ENCODE measurements at regions of chr3 and their contacts with region 1.

Region 1: DNA sequence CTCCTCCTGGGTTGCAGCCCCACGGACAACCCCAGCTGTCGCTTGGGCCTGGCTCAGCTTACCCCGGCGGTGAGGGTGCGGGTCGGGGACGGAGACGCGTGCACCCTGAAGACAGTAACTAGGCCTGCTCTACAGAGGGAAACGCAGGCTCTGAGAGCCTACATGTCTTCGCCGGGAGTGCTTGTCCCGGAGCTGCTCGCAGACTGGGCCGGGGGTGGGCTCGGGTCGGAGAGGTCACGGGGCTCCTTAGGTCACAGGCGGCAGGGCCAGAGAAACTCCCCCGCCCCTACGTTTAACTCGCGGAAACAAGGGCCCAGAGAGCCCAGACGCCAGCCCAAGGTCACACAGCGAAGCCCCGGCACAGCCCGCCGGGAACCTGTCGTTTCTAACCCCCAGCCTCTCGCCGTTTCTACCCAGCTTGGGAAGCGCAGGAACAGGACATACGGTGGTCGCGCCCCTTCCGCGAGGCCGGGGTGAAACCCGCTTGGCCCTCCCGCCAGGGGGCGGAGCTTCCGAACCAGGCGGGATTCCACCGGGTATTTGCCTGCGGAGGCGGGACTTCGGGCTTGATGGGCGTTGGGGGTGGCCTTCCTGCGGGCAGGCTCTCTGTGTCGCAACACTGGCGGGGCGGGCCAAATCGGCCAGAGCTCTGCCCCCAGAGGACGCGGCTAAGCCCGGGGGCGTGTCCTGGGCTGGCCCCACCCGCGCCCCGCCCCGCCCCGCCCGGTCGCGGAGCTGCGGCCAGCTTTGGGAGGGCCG is at the start of gene HDAC11:
- DNase-seq: peak; percentile 99
- H3K4me3 Mint-ChIP-seq: peak within 1 kb of the TSS; percentile 92
- H3K27ac Mint-ChIP-seq: peak within 1 kb of the TSS; percentile 82
- H3K4me1 Mint-ChIP-seq: peaks cover 12% of the 10 kb centered on the region
- H3K27me3 Mint-ChIP-seq: no peaks in the 10 kb centered on the region
- total RNA-seq, gene HDAC11: 1.6 to 2.4 TPM

Region 2: DNA sequence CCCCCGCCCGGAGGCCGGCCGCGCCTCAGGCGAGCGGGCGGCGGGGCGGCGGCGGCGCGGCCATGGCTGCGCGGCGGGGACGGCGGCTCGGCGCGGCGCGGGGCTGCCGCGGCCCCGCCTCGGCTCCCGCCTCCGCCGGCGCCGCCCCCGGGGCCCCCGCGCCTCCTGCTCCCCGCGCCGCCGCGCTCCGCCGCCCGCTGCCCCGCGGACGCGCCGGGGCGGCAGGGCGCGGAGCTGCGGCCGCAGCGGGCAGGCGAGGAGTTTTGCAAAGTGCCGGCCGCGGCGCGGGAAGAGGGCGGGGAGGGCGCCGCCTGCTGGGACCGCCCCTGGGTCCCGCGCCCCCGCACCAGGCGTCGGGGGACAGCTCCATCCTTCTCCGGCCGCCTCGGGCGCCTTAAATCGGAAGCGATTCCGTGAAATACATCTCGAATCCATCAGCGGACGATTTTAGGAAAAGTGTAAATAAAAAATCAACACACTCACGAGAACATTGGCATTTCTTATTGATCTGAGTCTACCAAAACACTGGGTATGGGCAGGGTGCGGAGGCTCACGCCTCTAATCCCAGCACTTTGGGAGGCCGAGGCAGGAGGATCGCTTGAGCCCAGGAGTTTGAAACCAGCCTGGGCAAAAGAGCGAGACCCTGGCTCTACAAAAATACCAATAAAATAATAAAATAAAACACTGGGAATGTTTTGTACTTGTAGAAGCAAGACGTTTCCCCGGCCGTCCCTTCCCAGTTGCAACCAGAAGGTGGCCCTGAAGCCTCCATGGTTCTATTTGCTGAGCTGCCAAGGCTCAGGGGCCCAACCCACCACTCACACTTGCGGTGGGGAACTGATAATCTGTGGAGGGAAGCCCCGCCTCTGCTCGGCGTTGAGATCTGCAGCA is 196.5 kb before region 1 on chr3:
- CTCF ChIA-PET with region 1: no interaction called
- intact Hi-C with region 1: no loop called
- DNase-seq: peak; percentile 19
- H3K4me3 Mint-ChIP-seq: peak overlapping the region; percentile 64
- H3K27ac Mint-ChIP-seq: no peak overlapping the region
- H3K4me1 Mint-ChIP-seq: peaks cover 4% of the 10 kb centered on the region
- H3K27me3 Mint-ChIP-seq: peaks cover 43% of the 10 kb centered on the region

Region 3: GRCh38 chr3:13346481-13347389 is 133.0 kb before region 1 on chr3:
- CTCF ChIA-PET with region 1: no interaction called
- intact Hi-C with region 1: loop called (anchors 1 kb)
- DNase-seq: peak; percentile 93
- H3K4me3 Mint-ChIP-seq: no peak overlapping the region
- H3K27ac Mint-ChIP-seq: peak overlapping the region; percentile 81
- H3K4me1 Mint-ChIP-seq: peaks cover 56% of the 10 kb centered on the region
- H3K27me3 Mint-ChIP-seq: no peaks in the 10 kb centered on the region

Region 4: DNA sequence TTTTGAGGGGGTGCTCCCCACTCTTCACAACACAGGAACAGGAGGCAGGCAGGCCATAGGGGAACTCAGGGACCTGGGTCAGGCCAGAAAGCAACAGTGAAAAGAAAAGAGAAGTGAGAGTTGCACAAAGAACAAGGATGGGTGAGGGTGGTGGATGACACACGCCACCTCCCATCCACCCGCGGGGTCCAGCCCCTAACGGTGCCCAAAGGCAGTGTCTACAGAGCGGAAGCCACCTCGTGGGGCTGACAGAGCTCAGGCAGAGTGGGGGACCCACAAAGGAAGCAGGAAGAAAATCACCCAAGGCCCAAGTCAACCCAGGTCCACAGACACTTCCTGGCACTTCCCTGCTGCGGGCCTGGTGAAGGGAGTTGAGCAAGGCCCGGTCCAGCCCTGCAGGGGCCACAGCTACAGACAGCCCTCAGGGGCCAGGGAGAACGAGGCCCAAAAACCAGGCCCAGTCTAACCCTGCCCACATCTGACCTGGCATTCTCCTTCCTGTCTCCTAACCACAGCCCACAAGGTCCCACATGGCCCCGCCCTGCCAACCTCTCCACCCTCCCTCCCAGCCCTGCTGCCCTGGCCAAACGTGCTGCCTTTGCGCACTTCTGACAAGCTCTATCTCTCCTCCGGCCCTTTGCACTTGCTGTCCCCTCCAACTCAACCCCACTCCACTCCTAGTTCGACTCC is 65.6 kb before region 1 on chr3:
- CTCF ChIA-PET with region 1: no interaction called
- intact Hi-C with region 1: loop called (anchors 2 kb)
- DNase-seq: peak; percentile 78
- H3K4me3 Mint-ChIP-seq: peak overlapping the region; percentile 63
- H3K27ac Mint-ChIP-seq: peak overlapping the region; percentile 93
- H3K4me1 Mint-ChIP-seq: peaks cover 61% of the 10 kb centered on the region
- H3K27me3 Mint-ChIP-seq: no peaks in the 10 kb centered on the region

Region 5: GRCh38 chr3:13419505-13420044 is 60.2 kb before region 1 on chr3:
- CTCF ChIA-PET with region 1: no interaction called
- intact Hi-C with region 1: loop called (anchors 2 kb)
- DNase-seq: peak; percentile 52
- H3K4me3 Mint-ChIP-seq: peak overlapping the region; percentile 92
- H3K27ac Mint-ChIP-seq: peak overlapping the region; percentile 93
- H3K4me1 Mint-ChIP-seq: peaks cover 70% of the 10 kb centered on the region
- H3K27me3 Mint-ChIP-seq: no peaks in the 10 kb centered on the region

Region 6: GRCh38 chr3:13879655-13880204 is 400.0 kb after region 1 on chr3 and contains the start of gene WNT7A:
- CTCF ChIA-PET with region 1: no interaction called
- intact Hi-C with region 1: loop called (anchors 5 kb)
- DNase-seq: peak; percentile 33
- H3K4me3 Mint-ChIP-seq: peak within 1 kb of the TSS; percentile 63
- H3K27ac Mint-ChIP-seq: no peak within 1 kb of the TSS
- H3K4me1 Mint-ChIP-seq: no peaks in the 10 kb centered on the region
- H3K27me3 Mint-ChIP-seq: peaks cover 10% of the 10 kb centered on the region
- total RNA-seq, gene WNT7A: 0.07 to 0.10 TPM

Region 7: DNA sequence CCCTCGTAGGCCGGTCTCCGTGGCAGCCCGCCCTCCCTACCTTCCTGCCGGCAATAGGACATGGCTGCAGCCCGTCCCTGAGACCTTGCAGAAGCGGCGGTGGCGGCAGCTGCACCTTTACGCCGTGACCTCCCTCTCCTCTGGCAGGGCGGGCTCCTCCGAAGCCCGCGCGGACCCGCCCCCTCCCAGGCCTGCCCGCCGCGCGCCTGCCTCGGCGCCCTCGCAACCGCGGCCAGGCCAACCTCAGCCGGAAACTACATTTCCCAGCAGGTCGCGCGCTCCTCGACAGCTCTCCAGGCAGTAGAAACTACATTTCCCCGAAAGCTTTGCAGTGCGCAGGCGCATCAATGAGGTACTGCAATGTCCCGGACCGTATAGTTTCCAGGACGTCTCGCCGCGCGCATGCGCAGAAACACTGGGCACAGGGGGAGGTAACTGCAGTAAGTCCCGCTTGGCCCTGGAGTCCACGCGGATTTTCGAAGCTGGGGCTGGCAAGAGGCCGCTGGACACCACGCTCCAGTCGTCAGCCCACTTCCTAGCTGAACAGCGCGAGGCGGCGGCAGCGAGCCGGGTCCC is 644.9 kb after region 1 on chr3 and contains the starts of genes CHCHD4 and TMEM43:
- CTCF ChIA-PET with region 1: no interaction called
- intact Hi-C with region 1: loop called (anchors 10 kb)
- DNase-seq: peak; percentile 99
- H3K4me3 Mint-ChIP-seq: peak within 1 kb of the TSS; percentile 93
- H3K27ac Mint-ChIP-seq: peak within 1 kb of the TSS; percentile 92
- H3K4me1 Mint-ChIP-seq: peaks cover 50% of the 10 kb centered on the region
- H3K27me3 Mint-ChIP-seq: no peaks in the 10 kb centered on the region
- total RNA-seq, gene CHCHD4: 16.2 to 17.9 TPM
- total RNA-seq, gene TMEM43: 18.3 to 19.8 TPM

Measured in activated naive CD4-positive, alpha-beta T cell treated with anti-CD3 and anti-CD28 coated beads for 36 hours (primary cell).